Calu3 (cell line): ENCODE measurements at regions of chr6 and their contacts with region 1.

Region 1: GRCh38 chr6:112043032-112044007 is 10.6 kb upstream of the CCN6 start:
- DNase-seq: peak; percentile 93
- H3K4me3 Mint-ChIP-seq: peak overlapping the region; percentile 83
- H3K27ac Mint-ChIP-seq: peak overlapping the region; percentile 84
- H3K4me1 Mint-ChIP-seq: no peaks in the 10 kb centered on the region
- H3K27me3 Mint-ChIP-seq: no peaks in the 10 kb centered on the region
- CTCF ChIP-seq: peak; percentile 89

Region 2: GRCh38 chr6:111259089-111259831 is 784.1 kb before region 1 on chr6:
- CTCF ChIA-PET with region 1: interaction called, 6 read pairs
- intact Hi-C with region 1: loop called (anchors 5 kb)
- DNase-seq: peak; percentile 97
- H3K4me3 Mint-ChIP-seq: peak overlapping the region; percentile 74
- H3K27ac Mint-ChIP-seq: peak overlapping the region; percentile 60
- H3K4me1 Mint-ChIP-seq: peaks cover 8% of the 10 kb centered on the region
- H3K27me3 Mint-ChIP-seq: no peaks in the 10 kb centered on the region
- CTCF ChIP-seq: peak; percentile 89

Region 3: GRCh38 chr6:111589366-111589765 is 454.0 kb before region 1 on chr6:
- CTCF ChIA-PET with region 1: no interaction called
- intact Hi-C with region 1: loop called (anchors 10 kb)
- DNase-seq: peak; percentile 69
- H3K4me3 Mint-ChIP-seq: peak overlapping the region; percentile 4
- H3K27ac Mint-ChIP-seq: peak overlapping the region; percentile 48
- H3K4me1 Mint-ChIP-seq: peaks cover 77% of the 10 kb centered on the region
- H3K27me3 Mint-ChIP-seq: no peaks in the 10 kb centered on the region
- CTCF ChIP-seq: no peak

Region 4: DNA sequence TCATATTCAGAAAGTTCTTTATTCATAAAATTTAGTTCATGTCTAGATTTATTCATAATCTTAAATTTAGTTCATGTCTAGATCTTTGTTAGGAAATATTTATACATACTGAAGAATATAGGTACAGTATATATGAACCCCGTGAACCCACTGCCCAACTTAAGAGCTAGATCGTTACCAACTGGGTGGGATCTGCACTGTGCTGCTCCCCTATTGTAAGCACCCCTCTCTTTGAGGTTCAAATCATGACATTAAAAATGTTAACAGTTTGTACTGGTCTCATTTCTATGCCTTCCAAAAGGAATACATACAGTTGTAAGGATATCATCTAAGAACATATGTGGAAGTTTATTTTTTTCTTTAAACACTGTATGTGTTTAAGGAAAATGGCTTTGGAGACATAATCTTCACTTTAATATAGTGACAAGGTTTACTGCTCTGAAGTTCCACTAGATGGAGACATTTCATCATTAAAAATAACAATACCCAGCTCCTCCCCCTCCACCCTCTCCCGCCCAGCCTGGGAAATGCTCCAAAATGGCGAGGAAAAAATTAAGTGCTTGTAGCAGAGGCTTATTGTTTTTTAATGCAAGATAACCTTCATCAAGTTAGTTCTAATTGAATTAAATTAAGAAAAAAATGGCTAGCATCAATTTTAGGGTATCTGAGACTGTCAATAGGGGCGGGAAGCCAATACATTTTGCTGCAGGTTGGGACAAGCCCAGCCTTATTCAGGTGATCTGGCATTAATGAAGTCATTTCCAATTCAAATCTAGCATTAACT is 333.5 kb before region 1 on chr6:
- CTCF ChIA-PET with region 1: interaction called, 13 read pairs
- intact Hi-C with region 1: loop called (anchors 1 kb)
- DNase-seq: peak; percentile 59
- H3K4me3 Mint-ChIP-seq: no peak overlapping the region
- H3K27ac Mint-ChIP-seq: no peak overlapping the region
- H3K4me1 Mint-ChIP-seq: peaks cover 15% of the 10 kb centered on the region
- H3K27me3 Mint-ChIP-seq: no peaks in the 10 kb centered on the region
- CTCF ChIP-seq: peak; percentile 75